Colonic mucosa (tissue), 4 donors: ENCODE measurements at regions of chr6 and their contacts with region 1.

Region 1: GRCh38 chr6:79713701-79714322 is 82.7 kb downstream of the SH3BGRL2 start:
- DNase-seq: peak; percentile 65
- H3K4me3 ChIP-seq: no peak overlapping the region
- H3K27ac ChIP-seq: no peak overlapping the region
- H3K4me1 ChIP-seq: no peaks in the 10 kb centered on the region
- H3K27me3 ChIP-seq: no peaks in the 10 kb centered on the region
- CTCF ChIP-seq: peak; percentile 47

Region 2: GRCh38 chr6:79404681-79405156 is 309.1 kb before region 1 on chr6:
- intact Hi-C with region 1: loop called (anchors 10 kb)
- DNase-seq: peak; percentile 70
- H3K4me3 ChIP-seq: no peak overlapping the region
- H3K27ac ChIP-seq: no peak overlapping the region
- H3K4me1 ChIP-seq: no peaks in the 10 kb centered on the region
- H3K27me3 ChIP-seq: no peaks in the 10 kb centered on the region
- CTCF ChIP-seq: no peak

Region 3: GRCh38 chr6:79564636-79565035 is 149.2 kb before region 1 on chr6:
- intact Hi-C with region 1: loop called (anchors 5 kb)
- DNase-seq: no peak
- H3K4me3 ChIP-seq: no peak overlapping the region
- H3K27ac ChIP-seq: no peak overlapping the region
- H3K4me1 ChIP-seq: no peaks in the 10 kb centered on the region
- H3K27me3 ChIP-seq: no peaks in the 10 kb centered on the region
- CTCF ChIP-seq: no peak

Region 4: GRCh38 chr6:79810185-79810705 is 96.4 kb after region 1 on chr6:
- intact Hi-C with region 1: no loop called
- DNase-seq: no peak
- H3K4me3 ChIP-seq: no peak overlapping the region
- H3K27ac ChIP-seq: no peak overlapping the region
- H3K4me1 ChIP-seq: no peaks in the 10 kb centered on the region
- H3K27me3 ChIP-seq: no peaks in the 10 kb centered on the region
- CTCF ChIP-seq: no peak